HEK293 (cell line): ENCODE measurements at regions of chr10 and their contacts with region 1.

Region 1: DNA sequence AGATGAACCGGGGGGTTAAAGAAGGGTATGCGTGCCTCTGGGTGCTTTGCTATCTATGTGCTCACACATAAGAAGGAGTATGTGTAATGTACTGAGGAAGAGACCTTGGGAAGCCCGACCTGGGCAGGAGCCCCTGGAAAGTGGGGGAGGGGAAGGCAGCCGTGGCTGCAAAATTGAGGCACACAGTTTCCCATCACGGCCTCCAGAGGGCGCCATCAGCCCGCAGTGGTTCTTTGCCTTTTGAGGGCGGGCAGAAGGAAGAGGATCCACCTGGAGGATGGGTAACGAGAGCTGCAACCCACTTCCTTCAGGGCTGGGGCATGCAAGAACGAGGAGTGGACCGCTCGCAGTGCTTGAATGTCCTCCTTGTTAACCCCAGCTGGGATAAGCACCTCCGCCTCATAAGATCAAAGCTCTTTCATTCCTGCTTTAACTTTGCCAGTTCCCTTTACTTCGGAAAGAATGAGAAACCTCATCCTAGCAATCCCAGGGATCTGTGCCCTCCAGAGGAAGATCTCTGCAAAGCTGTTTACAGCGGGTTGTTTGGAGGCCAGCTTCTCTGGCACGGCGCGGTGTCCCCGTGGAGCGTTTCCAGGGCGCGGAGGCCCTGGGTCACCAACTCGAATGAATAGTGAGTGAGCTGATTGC is 77.9 kb downstream of the PCGF5 start:
- H3K4me3 ChIP-seq: peak overlapping the region; percentile 12; the same call in 1 of the 2 replicates
- H3K27ac ChIP-seq: no peak overlapping the region
- H3K4me1 ChIP-seq: no peaks in the 10 kb centered on the region; the same call in 1 of the 2 replicates
- CTCF ChIP-seq: peak; percentile 92

Region 2: GRCh38 chr10:91313796-91314485 is 15.6 kb after region 1 on chr10:
- CTCF ChIA-PET with region 1: interaction called, 22 read pairs
- POLR2A ChIA-PET with region 1: no interaction called
- H3K4me3 ChIP-seq: no peak overlapping the region
- H3K27ac ChIP-seq: no peak overlapping the region
- H3K4me1 ChIP-seq: no peaks in the 10 kb centered on the region
- CTCF ChIP-seq: no peak

Region 3: GRCh38 chr10:91367127-91367531 is 68.8 kb after region 1 on chr10:
- CTCF ChIA-PET with region 1: interaction called, 18 read pairs
- POLR2A ChIA-PET with region 1: no interaction called
- H3K4me3 ChIP-seq: no peak overlapping the region
- H3K27ac ChIP-seq: no peak overlapping the region
- H3K4me1 ChIP-seq: peaks cover 5% of the 10 kb centered on the region; the same call in 1 of the 2 replicates
- CTCF ChIP-seq: no peak

Region 4: GRCh38 chr10:91389636-91390512 is 91.5 kb after region 1 on chr10:
- CTCF ChIA-PET with region 1: interaction called, 21 read pairs
- POLR2A ChIA-PET with region 1: interaction called, 5 read pairs
- H3K4me3 ChIP-seq: no peak overlapping the region
- H3K27ac ChIP-seq: no peak overlapping the region
- H3K4me1 ChIP-seq: peaks cover 3% of the 10 kb centered on the region; the same call in 1 of the 2 replicates
- CTCF ChIP-seq: no peak; the same call in 1 of the 2 replicates

Region 5: GRCh38 chr10:91536733-91537132 is 238.4 kb after region 1 on chr10:
- CTCF ChIA-PET with region 1: no interaction called
- POLR2A ChIA-PET with region 1: no interaction called
- H3K4me3 ChIP-seq: no peak overlapping the region
- H3K27ac ChIP-seq: no peak overlapping the region
- H3K4me1 ChIP-seq: no peaks in the 10 kb centered on the region
- CTCF ChIP-seq: no peak

Region 6: DNA sequence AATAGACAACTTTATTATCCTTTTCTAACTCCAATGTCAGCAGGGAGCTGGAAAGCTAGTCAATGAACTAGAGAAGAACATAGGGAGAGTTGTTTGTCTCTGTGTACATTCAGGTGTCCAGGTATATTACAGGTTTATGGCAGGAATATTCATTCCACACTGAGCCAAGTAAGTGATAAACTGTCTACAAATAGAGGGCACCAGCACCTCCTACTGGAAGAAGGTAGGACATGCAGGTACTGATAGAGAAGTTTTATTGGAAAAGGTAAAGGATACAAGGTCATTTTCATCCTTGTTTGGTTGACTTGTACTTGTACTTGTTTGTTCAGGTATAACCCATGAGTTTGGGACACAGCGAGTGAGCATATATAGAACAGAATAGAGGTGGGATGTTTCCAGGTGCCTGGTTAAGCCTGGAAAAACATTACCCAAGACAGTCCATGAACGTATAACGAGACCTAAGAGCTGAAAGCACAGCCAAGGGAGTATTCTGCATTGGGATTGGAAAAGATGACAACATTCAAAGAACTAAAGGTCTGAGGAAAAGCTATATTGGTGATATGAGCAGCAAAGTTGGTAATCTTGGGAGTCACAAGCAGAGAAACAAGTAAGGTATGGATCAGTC is 395.9 kb after region 1 on chr10:
- CTCF ChIA-PET with region 1: interaction called, 27 read pairs
- POLR2A ChIA-PET with region 1: no interaction called
- H3K4me3 ChIP-seq: no peak overlapping the region
- H3K27ac ChIP-seq: no peak overlapping the region
- H3K4me1 ChIP-seq: no peaks in the 10 kb centered on the region
- CTCF ChIP-seq: 0 out of 2 replicates have a peak, but pooled peaks have one; percentile 16